Endothelial cell of umbilical vein (primary cell): ENCODE measurements at regions of chr10 and their contacts with region 1.

Region 1: GRCh38 chr10:23293145-23293724 is 51.4 kb downstream of the C10orf67 start:
- DNase-seq: peak; percentile 33
- H3K4me3 ChIP-seq: no peak overlapping the region
- H3K27ac ChIP-seq: no peak overlapping the region
- H3K4me1 ChIP-seq: no peaks in the 10 kb centered on the region
- H3K27me3 ChIP-seq: no peaks in the 10 kb centered on the region
- CTCF ChIP-seq: peak; percentile 49 to 50
- POLR2A ChIP-seq: no peak

Region 2: DNA sequence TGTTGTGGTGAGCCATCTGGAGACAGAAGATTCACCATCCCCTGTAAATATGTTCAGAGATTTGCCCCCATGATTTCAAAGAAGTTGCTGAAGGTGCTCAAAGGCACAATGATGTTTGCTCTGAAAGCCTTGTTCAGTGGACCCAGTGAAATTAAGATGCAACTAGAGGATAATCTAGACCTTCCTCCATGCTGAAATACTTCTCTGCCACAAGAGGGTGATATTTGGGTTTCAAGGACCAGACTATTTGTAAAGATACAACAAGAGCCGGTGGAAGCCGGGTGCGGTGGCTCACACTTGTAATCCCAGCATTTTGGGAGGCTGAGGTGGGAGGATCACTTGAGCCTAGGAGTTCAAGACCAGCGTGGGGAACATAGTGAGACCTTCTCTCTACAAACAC is 211.3 kb before region 1 on chr10:
- CTCF ChIA-PET with region 1: no interaction called
- POLR2A ChIA-PET with region 1: no interaction called
- dilution Hi-C with region 1: no loop called
- intact Hi-C with region 1: loop called (anchors 2 kb)
- DNase-seq: peak; percentile 7
- H3K4me3 ChIP-seq: no peak overlapping the region
- H3K27ac ChIP-seq: no peak overlapping the region
- H3K4me1 ChIP-seq: no peaks in the 10 kb centered on the region
- H3K27me3 ChIP-seq: peaks cover 11 to 34% of the 10 kb centered on the region in 2 experiments
- CTCF ChIP-seq: peak in 1 of 2 donors; percentile 20
- POLR2A ChIP-seq: no peak

Region 3: DNA sequence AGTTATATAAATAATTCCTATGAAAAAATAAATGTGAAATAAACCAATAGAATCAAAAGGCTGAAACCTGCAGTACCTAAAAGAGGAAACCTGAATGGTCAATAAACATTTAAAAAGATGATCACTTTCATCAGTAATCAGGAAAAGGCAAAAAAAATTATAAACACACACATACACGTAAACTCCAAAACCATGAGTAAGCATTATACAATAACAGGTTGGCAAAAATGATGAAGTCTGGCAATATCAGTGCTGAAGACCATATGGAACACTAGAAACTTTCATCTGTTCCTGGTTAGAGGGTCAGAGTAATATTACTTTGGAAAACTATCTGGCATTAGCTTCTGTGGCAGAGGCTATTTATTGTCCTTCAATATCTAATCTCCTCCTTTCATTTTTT is 62.7 kb before region 1 on chr10:
- CTCF ChIA-PET with region 1: no interaction called
- POLR2A ChIA-PET with region 1: no interaction called
- dilution Hi-C with region 1: no loop called
- intact Hi-C with region 1: no loop called
- DNase-seq: no peak
- H3K4me3 ChIP-seq: no peak overlapping the region
- H3K27ac ChIP-seq: no peak overlapping the region
- H3K4me1 ChIP-seq: no peaks in the 10 kb centered on the region
- H3K27me3 ChIP-seq: no peaks in the 10 kb centered on the region
- CTCF ChIP-seq: no peak
- POLR2A ChIP-seq: no peak

Region 4: DNA sequence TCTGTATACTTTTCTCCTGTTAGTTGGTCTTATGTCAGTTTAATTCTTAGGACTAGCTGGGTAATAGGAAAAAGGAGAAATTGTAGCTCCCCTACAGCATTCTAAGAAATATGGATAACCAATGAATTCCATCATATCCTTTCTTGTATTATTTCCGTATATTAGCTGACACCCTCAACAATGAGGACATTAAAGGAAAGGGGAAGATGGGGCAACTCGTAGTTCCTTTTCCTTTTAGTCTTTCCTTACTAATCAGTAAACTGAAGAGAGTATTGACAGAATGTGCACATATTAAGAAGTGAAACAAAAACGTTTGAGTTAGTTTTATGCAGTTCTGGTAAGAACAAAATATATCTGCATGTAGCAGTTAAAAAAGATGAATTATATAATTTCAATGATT is 86.5 kb after region 1 on chr10:
- CTCF ChIA-PET with region 1: no interaction called
- POLR2A ChIA-PET with region 1: no interaction called
- dilution Hi-C with region 1: no loop called
- intact Hi-C with region 1: no loop called
- DNase-seq: no peak
- H3K4me3 ChIP-seq: no peak overlapping the region
- H3K27ac ChIP-seq: no peak overlapping the region
- H3K4me1 ChIP-seq: no peaks in the 10 kb centered on the region
- H3K27me3 ChIP-seq: no peaks in the 10 kb centered on the region
- CTCF ChIP-seq: no peak
- POLR2A ChIP-seq: no peak

Region 5: DNA sequence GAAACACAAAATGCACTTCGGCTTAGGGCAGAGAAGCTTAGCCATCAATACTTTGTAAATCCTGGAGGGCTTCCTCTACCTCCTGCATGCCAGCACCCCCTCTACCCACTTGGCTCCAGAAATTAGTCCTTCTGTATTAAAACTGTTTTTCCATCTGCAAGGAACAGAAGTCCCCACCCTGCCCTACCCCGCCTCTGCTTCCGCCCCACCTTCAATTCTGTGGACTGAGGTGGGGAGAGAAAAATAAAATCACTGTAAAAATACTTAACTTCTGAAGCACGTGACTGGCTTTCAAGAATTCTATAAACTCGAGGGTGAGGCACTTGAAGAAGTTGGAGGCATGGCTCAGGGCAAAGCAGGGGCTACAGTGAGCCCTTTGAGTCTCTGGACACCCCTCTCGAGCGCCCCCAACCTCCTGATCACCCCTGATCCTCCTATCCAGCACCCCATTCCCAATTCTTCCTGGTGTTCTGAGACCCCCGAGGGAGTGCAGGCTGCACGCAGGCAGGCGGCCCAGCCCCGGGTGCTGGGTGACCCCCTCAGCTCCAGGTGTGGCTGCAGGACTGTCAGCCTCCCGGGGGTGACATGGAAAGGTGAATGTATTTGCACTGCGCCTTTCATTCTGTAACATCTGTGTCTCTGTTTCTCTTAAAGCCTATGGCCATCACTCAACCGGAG is 908.4 kb after region 1 on chr10:
- CTCF ChIA-PET with region 1: no interaction called
- POLR2A ChIA-PET with region 1: no interaction called
- dilution Hi-C with region 1: no loop called
- intact Hi-C with region 1: loop called (anchors 5 kb)
- DNase-seq: no peak
- H3K4me3 ChIP-seq: no peak overlapping the region
- H3K27ac ChIP-seq: no peak overlapping the region
- H3K4me1 ChIP-seq: no peaks in the 10 kb centered on the region
- H3K27me3 ChIP-seq: no peaks in the 10 kb centered on the region
- CTCF ChIP-seq: no peak
- POLR2A ChIP-seq: no peak